CD8-positive, alpha-beta T cell (primary cell): ENCODE measurements at regions of chr3 and their contacts with region 1.

Region 1: DNA sequence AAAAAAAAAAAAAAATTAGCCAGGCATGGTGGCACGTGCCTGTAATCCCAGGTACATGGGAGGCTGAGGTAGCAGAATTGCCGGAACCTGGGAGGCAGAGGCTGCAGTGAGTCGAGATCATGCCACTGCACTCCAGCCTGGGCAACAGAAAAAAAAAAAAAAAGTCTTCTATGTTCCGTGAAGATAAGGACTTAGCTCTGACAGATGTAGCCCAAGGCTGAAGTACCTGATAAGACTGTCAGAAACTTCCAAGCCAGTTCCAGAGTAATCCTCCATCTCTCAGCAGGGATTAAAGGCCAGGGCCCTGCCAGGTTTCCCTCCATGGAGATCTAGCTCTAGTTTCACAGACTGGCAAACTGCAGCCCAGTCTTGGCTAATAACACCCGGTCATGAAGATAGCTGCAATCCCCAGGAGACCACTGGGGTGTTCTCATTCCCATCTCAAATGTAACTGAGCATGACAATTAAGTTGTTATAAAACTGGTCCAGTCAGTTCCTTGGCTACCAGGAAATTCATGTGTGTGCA is 8.5 kb downstream of the CDCP1 start:
- DNase-seq: no peak
- ATAC-seq: no peak
- H3K4me3 ChIP-seq: no peak overlapping the region
- H3K4me3 Mint-ChIP-seq: no peak overlapping the region
- H3K27ac ChIP-seq: no peak overlapping the region
- H3K27ac Mint-ChIP-seq: no peak overlapping the region
- H3K4me1 ChIP-seq: no peaks in the 10 kb centered on the region
- H3K4me1 Mint-ChIP-seq: no peaks in the 10 kb centered on the region
- H3K27me3 ChIP-seq: peaks cover 3% of the 10 kb centered on the region in 2 experiments
- H3K27me3 Mint-ChIP-seq: peaks cover 11% of the 10 kb centered on the region
- CTCF ChIP-seq: no peak

Region 2: DNA sequence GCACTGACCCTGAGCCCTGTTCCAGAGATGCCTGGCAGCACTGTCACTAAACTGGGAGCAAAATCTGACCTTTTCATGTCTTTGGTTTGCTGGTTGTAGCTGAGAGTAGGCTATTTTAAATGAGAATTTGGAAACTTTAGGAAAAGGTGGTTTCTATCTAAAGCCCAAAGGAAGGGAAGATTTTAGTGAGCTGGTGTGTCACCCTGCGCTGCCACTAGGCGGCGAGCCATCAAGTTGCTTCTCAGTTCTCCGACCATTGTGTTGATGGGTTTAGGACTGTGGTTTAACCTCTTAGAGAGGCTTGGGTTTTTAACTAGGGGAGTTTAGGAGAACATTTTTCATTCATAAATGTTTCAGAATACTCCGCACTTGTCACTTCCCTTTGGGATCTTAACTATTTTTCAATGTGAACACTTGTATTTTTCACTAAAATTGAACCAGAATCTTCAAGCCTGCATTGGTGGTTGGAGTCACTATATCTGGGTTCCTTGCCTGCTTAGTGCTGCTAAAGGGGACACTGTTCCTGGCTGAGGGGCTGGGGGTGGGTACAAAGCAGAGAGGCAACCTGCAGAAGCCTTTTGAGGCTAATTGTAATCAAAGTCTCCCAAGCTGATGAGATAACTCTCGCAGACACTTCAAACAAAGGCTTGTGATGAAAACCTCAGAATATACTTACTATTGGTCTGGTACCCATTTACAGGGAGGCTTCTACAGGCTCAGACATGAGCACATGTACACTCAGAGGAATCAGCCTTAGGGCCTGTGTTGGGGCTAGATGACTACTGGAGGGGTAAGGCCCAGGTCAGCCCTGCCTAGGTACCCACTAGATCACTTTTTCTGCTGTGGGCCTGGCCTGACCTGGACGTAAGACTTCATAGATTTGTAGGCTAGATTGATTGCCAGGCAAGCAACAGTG is 144.9 kb before region 1 on chr3:
- CTCF ChIA-PET with region 1: no interaction called
- POLR2A ChIA-PET with region 1: no interaction called
- intact Hi-C with region 1: no loop called
- DNase-seq: peak in 2 of 9 experiments; percentile 27 to 30
- ATAC-seq: peak; percentile 62
- H3K4me3 ChIP-seq: no peak overlapping the region
- H3K4me3 Mint-ChIP-seq: no peak overlapping the region
- H3K27ac ChIP-seq: no peak overlapping the region
- H3K27ac Mint-ChIP-seq: no peak overlapping the region
- H3K4me1 ChIP-seq: peaks cover 11% of the 10 kb centered on the region
- H3K4me1 Mint-ChIP-seq: peaks cover 54% of the 10 kb centered on the region
- H3K27me3 ChIP-seq: no peaks in the 10 kb centered on the region
- H3K27me3 Mint-ChIP-seq: no peaks in the 10 kb centered on the region
- CTCF ChIP-seq: peak; percentile 76

Region 3: DNA sequence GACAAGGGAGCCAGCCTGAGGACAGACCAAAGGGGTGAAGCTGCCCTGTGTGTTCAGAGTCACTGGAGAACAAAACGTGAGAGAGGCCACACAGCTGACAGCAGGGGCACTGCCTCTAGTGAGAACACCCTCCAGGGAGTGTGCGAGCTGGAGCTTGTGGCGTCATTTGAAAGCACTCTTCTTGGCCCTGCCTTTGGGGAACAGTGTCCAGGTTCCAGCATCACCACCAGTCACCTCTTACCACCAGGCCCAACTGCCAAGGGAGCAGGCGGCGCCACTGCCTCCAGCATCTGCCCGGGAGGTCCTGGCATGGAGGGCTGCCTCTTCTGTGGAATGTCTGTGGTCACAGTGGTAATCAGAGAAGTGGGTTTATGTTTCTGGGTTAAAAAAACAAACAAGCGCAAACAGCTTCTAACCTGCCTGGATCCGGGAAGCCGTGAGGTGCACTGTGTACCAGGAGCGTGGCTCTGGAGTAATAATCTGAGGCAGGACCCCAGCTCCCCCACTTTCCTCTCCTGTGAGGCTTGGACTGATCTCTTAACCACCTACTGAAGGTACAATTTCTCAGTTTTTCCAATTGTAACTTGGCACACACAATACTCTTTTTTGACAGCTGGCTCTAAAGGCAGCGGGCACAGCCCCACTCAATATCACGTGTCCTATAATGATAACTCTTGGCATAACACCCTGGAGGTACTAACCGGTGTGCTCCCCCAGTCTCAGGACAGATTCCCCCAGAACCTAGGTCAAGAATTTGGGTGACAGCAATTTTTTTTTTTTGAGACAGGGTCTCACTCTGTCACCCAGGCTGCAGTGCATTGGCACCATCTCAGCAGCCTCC is 40.7 kb after region 1 on chr3:
- CTCF ChIA-PET with region 1: no interaction called
- POLR2A ChIA-PET with region 1: no interaction called
- intact Hi-C with region 1: loop called in 1 of 2 experiments (anchors 5 kb)
- DNase-seq: no peak
- ATAC-seq: no peak
- H3K4me3 ChIP-seq: no peak overlapping the region
- H3K4me3 Mint-ChIP-seq: no peak overlapping the region
- H3K27ac ChIP-seq: no peak overlapping the region
- H3K27ac Mint-ChIP-seq: no peak overlapping the region
- H3K4me1 ChIP-seq: no peaks in the 10 kb centered on the region
- H3K4me1 Mint-ChIP-seq: no peaks in the 10 kb centered on the region
- H3K27me3 ChIP-seq: no peaks in the 10 kb centered on the region
- H3K27me3 Mint-ChIP-seq: peaks cover 12% of the 10 kb centered on the region
- CTCF ChIP-seq: no peak